ENCODE measurements at regions of chr5 and their contacts with region 1.

Region 1: DNA sequence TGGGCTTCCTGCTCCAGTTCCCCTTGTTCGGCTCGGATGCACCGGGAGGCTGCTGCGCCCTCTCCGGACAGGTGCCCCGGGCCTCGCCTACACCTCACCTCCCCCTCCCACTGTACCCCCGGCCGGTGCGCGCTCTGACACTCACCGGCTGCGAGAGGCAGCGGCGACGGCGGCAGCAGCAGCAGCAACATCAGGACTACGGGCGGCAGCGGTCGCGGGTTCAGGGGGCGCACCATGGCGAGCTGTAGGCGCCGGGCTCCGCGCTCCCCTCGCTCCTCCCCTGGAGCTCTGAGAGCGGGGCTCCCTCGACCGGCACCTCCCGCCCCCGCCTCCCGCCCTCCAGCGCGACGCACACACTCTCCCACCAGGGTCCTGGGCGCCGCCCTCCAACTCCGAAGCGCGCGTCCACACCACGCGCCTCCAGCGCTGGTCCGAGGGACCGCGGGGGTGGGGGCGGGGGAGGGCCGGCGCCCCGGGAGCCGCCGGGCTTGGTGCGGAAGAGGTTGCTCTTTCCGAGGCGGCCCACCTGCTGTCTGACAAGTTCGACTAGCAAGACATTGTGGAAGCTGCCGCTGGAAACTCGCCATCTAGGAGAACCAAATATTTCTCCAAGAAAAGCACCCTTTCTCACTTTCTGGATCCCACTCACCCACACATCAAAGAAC is at the start of gene GFRA3:
- DNase-seq: peak; percentile 77
- H3K4me3 ChIP-seq: peak within 1 kb of the TSS; percentile 35 to 39; a peak in 3 of 4 replicates
- H3K27ac ChIP-seq: peak within 1 kb of the TSS in 1 of 2 experiments; percentile 95; a peak in 2 of 4 replicates
- H3K4me1 ChIP-seq: peaks cover 0 to 22% of the 10 kb centered on the region in 2 experiments; a peak in 2 of 4 replicates
- H3K27me3 ChIP-seq: no peaks in the 10 kb centered on the region
- CTCF ChIP-seq: no peak
- EP300 ChIP-seq: no peak
- RAD21 ChIP-seq: no peak
- polyA plus RNA-seq, gene GFRA3: 0.11 and 0.15 TPM in 2 replicates

Region 2: DNA sequence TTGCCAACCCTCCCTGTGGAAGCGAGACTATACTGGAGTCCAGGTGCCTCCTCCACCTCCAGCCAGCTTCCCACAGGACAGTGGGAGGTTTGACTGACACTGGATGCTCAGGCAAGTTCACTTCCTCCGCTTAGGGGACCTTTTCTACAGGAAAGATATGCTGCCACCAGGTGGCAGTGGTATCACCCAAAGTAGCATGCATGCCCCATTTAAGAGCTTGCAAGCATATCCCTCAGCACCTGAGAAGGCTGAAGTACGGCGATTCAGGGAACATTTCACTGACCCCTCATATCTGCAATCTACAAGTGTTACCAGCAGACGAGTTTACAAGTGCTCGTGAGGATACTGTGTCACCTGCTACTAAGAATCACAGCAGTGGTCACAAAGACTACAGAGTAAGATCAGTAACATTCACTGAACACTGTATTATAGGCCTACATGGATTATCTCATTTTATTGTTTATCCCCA is 613.9 kb before region 1 on chr5:
- CTCF ChIA-PET with region 1: no interaction called
- POLR2A ChIA-PET with region 1: no interaction called
- DNase-seq: peak; percentile 64
- H3K4me3 ChIP-seq: no peak overlapping the region
- H3K27ac ChIP-seq: no peak overlapping the region
- H3K4me1 ChIP-seq: peaks cover 0 to 2% of the 10 kb centered on the region in 2 experiments; a peak in 1 of 4 replicates
- H3K27me3 ChIP-seq: no peaks in the 10 kb centered on the region
- CTCF ChIP-seq: peak; percentile 78
- EP300 ChIP-seq: no peak
- RAD21 ChIP-seq: peak; percentile 82

Region 3: DNA sequence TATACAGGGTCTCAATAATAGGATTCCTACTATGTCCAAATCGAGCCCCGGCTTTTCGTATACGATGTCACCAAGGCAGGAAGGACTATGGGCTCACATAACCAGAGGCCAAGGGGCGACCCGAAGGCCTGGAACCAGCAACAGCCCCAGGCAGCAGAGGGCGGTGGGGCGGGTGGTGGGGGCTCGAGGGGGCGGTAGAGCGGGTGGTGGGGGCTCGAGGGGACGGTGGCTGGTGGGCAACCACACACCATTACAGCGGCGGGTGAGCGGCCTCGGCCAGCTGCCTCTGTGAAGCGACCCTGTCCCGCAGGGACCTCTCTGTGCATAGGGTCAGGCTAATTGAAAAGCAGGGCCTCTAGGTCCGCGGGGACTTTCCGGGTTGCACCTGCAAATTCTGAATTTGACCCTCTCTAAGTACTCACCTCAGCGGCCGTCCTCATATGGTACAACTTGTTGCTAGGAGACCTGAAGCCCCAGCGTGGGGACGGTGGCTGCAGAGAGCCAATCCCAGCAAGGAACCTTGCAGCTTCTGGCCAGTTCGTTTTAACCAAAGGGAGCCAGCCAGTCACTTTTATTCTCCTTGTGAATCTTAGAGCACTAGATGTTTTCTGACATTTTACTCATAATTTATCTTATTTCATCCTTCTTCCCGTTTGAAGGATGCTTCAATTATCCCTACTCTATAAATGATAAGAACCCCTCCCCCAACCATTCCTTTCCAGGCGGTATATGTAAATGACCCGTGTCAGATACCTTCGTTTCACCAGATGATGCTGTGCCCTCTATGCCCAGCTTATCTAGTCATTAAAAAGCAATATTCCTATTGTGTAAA is 135.2 kb before region 1 on chr5 and contains the start of gene NME5:
- CTCF ChIA-PET with region 1: no interaction called
- POLR2A ChIA-PET with region 1: no interaction called
- DNase-seq: peak; percentile 88
- H3K4me3 ChIP-seq: peak within 1 kb of the TSS; percentile 77 to 80
- H3K27ac ChIP-seq: peak within 1 kb of the TSS in 1 of 2 experiments; percentile 12; a peak in 1 of 4 replicates
- H3K4me1 ChIP-seq: no peaks in the 10 kb centered on the region
- H3K27me3 ChIP-seq: no peaks in the 10 kb centered on the region
- CTCF ChIP-seq: no peak
- EP300 ChIP-seq: no peak
- RAD21 ChIP-seq: no peak
- polyA plus RNA-seq, gene NME5: 3.7 and 4.1 TPM in 2 replicates

Region 4: GRCh38 chr5:138178516-138179276 is 95.6 kb before region 1 on chr5 and contains the starts of genes BRD8 and KIF20A:
- CTCF ChIA-PET with region 1: interaction called, 12 read pairs
- POLR2A ChIA-PET with region 1: interaction called, 3 read pairs
- DNase-seq: peak; percentile 87
- H3K4me3 ChIP-seq: peak within 1 kb of the TSS; percentile 81 to 90
- H3K27ac ChIP-seq: peak within 1 kb of the TSS; percentile 86 to 97
- H3K4me1 ChIP-seq: peaks cover 0 to 13% of the 10 kb centered on the region in 2 experiments; a peak in 2 of 4 replicates
- H3K27me3 ChIP-seq: no peaks in the 10 kb centered on the region
- CTCF ChIP-seq: no peak
- EP300 ChIP-seq: peak in 1 of 2 experiments; percentile 19; a peak in 1 of 4 replicates
- RAD21 ChIP-seq: no peak
- polyA plus RNA-seq, gene BRD8: 46.2 and 64.4 TPM in 2 replicates
- polyA plus RNA-seq, gene KIF20A: 16.0 and 17.4 TPM in 2 replicates

Region 5: GRCh38 chr5:138230981-138231589 is 43.2 kb before region 1 on chr5:
- CTCF ChIA-PET with region 1: interaction called, 10 read pairs
- POLR2A ChIA-PET with region 1: interaction called, 5 read pairs
- DNase-seq: no peak
- H3K4me3 ChIP-seq: no peak overlapping the region
- H3K27ac ChIP-seq: no peak overlapping the region
- H3K4me1 ChIP-seq: peaks cover 0 to 9% of the 10 kb centered on the region in 2 experiments; a peak in 1 of 4 replicates
- H3K27me3 ChIP-seq: no peaks in the 10 kb centered on the region
- CTCF ChIP-seq: no peak
- EP300 ChIP-seq: no peak
- RAD21 ChIP-seq: no peak

Region 6: DNA sequence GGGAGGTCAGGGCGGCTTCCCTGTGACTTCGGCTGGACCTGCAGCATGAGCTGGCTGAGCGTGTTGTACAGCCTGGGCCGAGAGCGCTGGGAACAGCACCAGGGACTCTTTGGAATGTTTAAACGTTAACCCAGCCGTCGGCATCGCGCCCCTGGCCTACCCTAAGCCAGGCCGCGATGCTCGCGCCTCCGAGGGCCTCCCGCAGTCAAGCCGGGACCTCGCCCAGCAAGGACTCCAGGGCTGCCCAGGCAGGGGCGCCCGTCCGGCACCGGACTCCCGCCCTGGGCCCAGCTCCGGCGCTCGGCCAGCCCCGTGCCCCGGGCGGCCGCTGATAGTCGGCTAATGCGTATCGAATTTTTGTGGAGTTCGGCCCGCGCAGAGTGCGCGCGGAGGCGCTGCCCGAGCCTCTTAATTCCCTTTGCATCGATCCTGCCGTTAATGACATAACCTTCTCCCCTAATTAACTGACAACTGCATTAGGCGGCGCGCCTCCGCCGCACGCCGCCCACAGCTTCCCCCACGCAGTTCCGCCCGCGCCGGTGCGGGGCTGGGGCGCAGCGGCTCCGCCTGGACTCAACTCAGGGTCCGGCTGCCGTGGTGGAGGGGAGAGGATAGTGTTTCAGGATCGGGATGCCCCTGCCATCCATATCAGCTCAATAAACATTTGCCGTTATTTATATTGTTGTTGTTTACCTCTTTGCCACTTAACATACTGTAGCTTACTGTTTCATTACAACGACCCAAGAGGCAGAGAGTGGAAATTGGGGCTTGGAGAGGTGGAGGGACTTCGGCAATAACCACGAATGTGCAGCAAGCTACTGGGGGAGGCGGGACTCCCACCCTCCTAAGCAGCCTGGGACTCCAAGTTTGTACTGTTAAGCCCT is 32.4 kb before region 1 on chr5:
- CTCF ChIA-PET with region 1: interaction called, 27 read pairs
- POLR2A ChIA-PET with region 1: interaction called, 19 read pairs
- DNase-seq: peak; percentile 87
- H3K4me3 ChIP-seq: peak overlapping the region; percentile 44 to 52
- H3K27ac ChIP-seq: no peak overlapping the region
- H3K4me1 ChIP-seq: peaks cover 0 to 10% of the 10 kb centered on the region in 2 experiments; a peak in 1 of 4 replicates
- H3K27me3 ChIP-seq: peaks cover 16% of the 10 kb centered on the region; the same call in 1 of the 2 replicates
- CTCF ChIP-seq: no peak
- EP300 ChIP-seq: no peak
- RAD21 ChIP-seq: no peak

Region 7: GRCh38 chr5:138305797-138306196 is 31.5 kb after region 1 on chr5:
- CTCF ChIA-PET with region 1: no interaction called
- POLR2A ChIA-PET with region 1: no interaction called
- DNase-seq: no peak
- H3K4me3 ChIP-seq: no peak overlapping the region
- H3K27ac ChIP-seq: no peak overlapping the region
- H3K4me1 ChIP-seq: no peaks in the 10 kb centered on the region
- H3K27me3 ChIP-seq: no peaks in the 10 kb centered on the region
- CTCF ChIP-seq: no peak
- EP300 ChIP-seq: no peak
- RAD21 ChIP-seq: no peak